HEK293 (cell line): ENCODE measurements at regions of chr10 and their contacts with region 1.

Region 1: DNA sequence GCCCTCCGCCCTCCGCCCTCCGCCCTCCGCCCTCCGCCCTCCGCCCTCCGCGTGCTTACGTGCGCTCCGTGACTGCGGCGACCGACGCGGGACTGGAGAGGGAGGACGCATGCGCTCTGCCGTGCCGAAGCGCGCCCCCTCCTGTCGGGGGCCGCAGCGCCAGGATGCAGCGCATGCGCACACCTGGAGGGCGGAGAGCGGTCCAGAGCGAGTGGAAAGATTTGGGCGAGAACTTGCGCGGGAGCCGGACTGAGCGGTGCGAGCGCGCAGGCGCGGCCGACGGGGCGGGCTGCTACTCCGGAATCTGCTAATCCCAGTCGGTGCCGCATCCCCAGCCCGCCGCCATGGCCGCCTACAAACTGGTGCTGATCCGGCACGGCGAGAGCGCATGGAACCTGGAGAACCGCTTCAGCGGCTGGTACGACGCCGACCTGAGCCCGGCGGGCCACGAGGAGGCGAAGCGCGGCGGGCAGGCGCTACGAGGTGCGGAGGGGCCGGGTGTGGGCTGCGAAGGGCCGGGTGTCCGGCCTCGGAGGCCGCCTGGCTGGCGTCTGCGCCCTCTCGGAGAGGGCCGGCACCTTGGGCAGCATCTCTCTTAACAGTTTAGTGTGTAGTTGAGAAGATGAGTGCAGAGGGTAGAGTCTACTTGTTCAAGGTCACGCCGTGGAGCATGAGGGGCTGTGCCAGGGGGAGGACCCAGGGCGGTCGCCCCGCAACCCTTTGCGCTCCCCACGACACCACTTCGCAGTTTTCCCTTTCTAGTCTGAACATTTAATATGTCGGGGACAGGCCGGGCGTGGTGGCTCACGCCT is at the start of gene PGAM1:
- H3K4me3 ChIP-seq: peak within 1 kb of the TSS; percentile 87
- H3K27ac ChIP-seq: peak within 1 kb of the TSS; percentile 96
- H3K4me1 ChIP-seq: no peaks in the 10 kb centered on the region; the same call in 1 of the 2 replicates
- CTCF ChIP-seq: peak; percentile 99

Region 2: DNA sequence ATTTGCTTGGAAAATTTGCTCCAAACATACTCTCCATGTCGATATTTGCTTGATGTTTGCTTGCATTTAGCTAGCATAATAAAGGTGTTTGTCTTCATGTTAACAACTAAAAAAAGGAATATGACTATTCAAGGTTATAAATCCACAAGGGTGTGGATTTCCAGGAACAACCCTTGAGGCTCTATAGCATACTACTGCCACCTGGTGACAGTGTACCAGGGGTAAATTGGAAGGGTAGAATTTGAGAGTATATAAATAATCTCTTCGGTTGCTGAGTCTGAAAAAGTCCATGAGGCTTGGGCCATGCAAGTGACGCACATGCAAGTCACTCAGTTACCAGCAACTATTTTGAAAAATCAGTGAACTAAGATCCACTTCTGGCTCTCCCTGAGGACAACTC is 308.8 kb before region 1 on chr10:
- CTCF ChIA-PET with region 1: no interaction called
- POLR2A ChIA-PET with region 1: no interaction called
- H3K4me3 ChIP-seq: no peak overlapping the region
- H3K27ac ChIP-seq: no peak overlapping the region
- H3K4me1 ChIP-seq: no peaks in the 10 kb centered on the region
- CTCF ChIP-seq: 0 out of 2 replicates have a peak, but pooled peaks have one; percentile 12

Region 3: GRCh38 chr10:97407211-97407951 is 18.8 kb before region 1 on chr10:
- CTCF ChIA-PET with region 1: interaction called, 14 read pairs
- POLR2A ChIA-PET with region 1: interaction called, 4 read pairs
- H3K4me3 ChIP-seq: peak overlapping the region; percentile 15; the same call in 1 of the 2 replicates
- H3K27ac ChIP-seq: no peak overlapping the region
- H3K4me1 ChIP-seq: no peaks in the 10 kb centered on the region
- CTCF ChIP-seq: peak; percentile 90

Region 4: DNA sequence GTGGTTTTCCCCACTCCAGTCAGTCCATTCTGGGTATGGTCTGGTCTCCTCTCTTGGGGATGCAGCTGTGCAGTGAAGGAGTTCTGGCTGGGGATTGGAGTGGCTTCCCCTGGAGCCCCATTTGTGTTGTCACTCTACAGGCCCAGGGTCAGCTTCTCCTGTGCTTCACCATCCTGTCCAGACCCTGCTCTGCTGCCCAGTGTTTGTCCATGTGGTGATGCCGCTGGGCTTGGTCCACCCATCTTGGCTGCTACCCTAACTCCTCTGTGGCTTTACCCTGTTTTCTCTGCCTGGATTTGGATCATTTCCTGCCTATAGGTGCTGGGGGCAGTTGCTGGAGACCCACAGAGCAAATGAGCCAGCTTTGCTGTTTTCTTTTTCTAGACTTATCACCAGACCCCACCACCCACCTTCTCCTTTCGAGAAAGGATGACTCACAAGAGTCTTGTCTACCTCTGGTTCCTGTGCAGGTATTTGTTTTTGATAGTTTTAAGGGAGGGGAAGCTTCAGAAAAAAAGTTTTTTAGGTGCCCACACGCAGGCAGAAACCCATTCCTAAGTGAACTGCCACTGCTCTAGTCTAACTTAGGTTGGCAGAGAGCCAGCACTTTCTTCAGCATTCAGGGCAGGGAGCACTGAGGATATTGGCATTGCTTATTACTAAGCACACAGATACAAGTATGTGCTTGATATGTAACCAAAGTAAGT is 28.3 kb after region 1 on chr10:
- CTCF ChIA-PET with region 1: interaction called, 3 read pairs
- POLR2A ChIA-PET with region 1: interaction called, 12 read pairs
- H3K4me3 ChIP-seq: no peak overlapping the region
- H3K27ac ChIP-seq: no peak overlapping the region
- H3K4me1 ChIP-seq: peaks cover 6% of the 10 kb centered on the region
- CTCF ChIP-seq: no peak

Region 5: DNA sequence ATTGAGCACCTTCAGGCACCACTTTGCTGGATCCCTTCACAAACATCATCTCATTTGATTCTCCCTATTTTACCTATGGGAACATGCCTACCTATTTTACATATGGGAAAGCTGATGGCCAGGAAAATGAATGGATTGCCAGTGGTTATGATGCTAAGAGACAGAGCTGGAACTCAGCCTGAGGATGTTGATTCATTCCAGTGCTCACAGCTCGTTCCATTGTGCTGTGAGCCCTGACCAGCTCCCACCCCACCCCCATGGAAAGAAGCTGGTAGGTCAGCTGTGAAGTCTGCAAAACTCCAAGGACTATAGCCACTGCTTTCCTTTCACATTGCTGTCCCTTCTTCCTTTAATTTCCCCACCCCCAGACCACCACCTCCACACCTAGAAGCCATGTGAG is 82.2 kb after region 1 on chr10:
- CTCF ChIA-PET with region 1: no interaction called
- POLR2A ChIA-PET with region 1: no interaction called
- H3K4me3 ChIP-seq: no peak overlapping the region
- H3K27ac ChIP-seq: no peak overlapping the region
- H3K4me1 ChIP-seq: no peaks in the 10 kb centered on the region
- CTCF ChIP-seq: no peak